ENCODE measurements at regions of chr3 and their contacts with region 1.

Region 1: GRCh38 chr3:66500576-66501482 is at the start of gene LRIG1:
- DNase-seq: peak; percentile 100
- ATAC-seq: peak; percentile 98 to 99
- H3K4me3 ChIP-seq: peak within 1 kb of the TSS; percentile 81
- H3K27ac ChIP-seq: peak within 1 kb of the TSS; percentile 76
- H3K4me1 ChIP-seq: peaks cover 3% of the 10 kb centered on the region
- H3K27me3 ChIP-seq: no peaks in the 10 kb centered on the region
- total RNA-seq, gene LRIG1: 103 to 140 (median 122) TPM

Region 2: GRCh38 chr3:66076861-66077470 is 423.9 kb before region 1 on chr3:
- intact Hi-C with region 1: no loop called
- DNase-seq: no peak
- ATAC-seq: no peak
- H3K4me3 ChIP-seq: no peak overlapping the region
- H3K27ac ChIP-seq: no peak overlapping the region
- H3K4me1 ChIP-seq: no peaks in the 10 kb centered on the region
- H3K27me3 ChIP-seq: no peaks in the 10 kb centered on the region

Region 3: GRCh38 chr3:66407611-66408218 is 93.1 kb before region 1 on chr3:
- intact Hi-C with region 1: loop called in 3 of 4 experiments (anchors 5 to 10 kb)
- DNase-seq: peak; percentile 67 to 91 (median 89)
- ATAC-seq: peak; percentile 64 to 65
- H3K4me3 ChIP-seq: no peak overlapping the region
- H3K27ac ChIP-seq: no peak overlapping the region
- H3K4me1 ChIP-seq: peaks cover 2% of the 10 kb centered on the region
- H3K27me3 ChIP-seq: no peaks in the 10 kb centered on the region

Region 4: DNA sequence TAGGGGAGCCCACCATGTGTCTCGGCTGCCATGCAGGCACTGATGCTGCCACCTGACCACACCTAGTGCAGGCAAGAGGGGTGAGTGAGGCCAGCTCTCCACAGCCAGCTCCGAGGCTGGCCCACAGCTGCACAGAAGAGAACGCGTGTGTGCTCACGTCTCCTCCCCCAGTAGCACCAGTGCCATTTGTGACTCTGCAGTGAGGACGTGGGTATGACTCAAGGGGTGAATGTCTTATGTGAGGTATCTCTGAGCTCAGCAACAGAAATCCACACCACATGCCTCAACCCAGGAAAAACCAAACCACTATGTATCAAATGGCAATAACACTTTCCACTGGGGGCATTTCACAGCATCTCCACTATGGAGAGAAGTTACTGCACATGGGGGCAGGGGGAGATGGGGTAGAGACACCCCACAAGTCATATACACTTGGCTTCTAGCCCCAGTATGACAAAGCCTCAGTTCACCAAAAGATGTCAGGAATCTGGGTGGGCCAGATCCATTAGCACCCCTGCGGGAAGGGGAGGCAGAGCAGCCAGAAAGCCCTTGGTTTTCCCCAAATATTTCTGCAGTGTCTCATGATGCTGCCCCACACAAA is 87.6 kb before region 1 on chr3:
- intact Hi-C with region 1: loop called (anchors 5 to 10 kb)
- DNase-seq: no peak
- ATAC-seq: no peak
- H3K4me3 ChIP-seq: no peak overlapping the region
- H3K27ac ChIP-seq: peak overlapping the region; percentile 18
- H3K4me1 ChIP-seq: peaks cover 11% of the 10 kb centered on the region
- H3K27me3 ChIP-seq: no peaks in the 10 kb centered on the region

Region 5: DNA sequence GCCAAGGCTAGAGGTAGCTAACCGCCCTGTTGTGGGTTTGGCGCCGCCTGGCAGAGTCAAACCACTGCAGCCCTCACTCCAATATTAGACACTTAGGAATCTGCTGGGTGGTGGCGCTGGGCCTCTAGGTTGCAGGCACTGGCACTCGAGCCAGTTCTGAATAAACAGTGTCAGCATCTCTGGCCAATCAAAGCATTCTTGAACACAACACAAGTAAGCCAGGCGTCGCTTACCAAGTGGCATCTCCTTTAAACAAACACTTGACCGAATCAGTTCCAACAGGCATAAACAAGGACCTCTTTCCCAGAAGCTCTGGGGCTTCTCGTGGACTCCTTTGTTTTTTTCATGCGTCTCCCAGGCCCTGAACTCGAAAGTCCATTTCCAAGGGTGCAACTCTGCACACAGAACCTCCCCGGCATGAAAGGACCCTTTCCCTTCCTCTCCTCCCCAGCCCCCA is 82.3 kb before region 1 on chr3:
- intact Hi-C with region 1: loop called in 3 of 4 experiments (anchors 5 to 10 kb)
- DNase-seq: peak in 2 of 3 donors; percentile 70
- ATAC-seq: peak; percentile 58 to 71
- H3K4me3 ChIP-seq: no peak overlapping the region
- H3K27ac ChIP-seq: peak overlapping the region; percentile 8
- H3K4me1 ChIP-seq: peaks cover 9% of the 10 kb centered on the region
- H3K27me3 ChIP-seq: no peaks in the 10 kb centered on the region

Region 6: DNA sequence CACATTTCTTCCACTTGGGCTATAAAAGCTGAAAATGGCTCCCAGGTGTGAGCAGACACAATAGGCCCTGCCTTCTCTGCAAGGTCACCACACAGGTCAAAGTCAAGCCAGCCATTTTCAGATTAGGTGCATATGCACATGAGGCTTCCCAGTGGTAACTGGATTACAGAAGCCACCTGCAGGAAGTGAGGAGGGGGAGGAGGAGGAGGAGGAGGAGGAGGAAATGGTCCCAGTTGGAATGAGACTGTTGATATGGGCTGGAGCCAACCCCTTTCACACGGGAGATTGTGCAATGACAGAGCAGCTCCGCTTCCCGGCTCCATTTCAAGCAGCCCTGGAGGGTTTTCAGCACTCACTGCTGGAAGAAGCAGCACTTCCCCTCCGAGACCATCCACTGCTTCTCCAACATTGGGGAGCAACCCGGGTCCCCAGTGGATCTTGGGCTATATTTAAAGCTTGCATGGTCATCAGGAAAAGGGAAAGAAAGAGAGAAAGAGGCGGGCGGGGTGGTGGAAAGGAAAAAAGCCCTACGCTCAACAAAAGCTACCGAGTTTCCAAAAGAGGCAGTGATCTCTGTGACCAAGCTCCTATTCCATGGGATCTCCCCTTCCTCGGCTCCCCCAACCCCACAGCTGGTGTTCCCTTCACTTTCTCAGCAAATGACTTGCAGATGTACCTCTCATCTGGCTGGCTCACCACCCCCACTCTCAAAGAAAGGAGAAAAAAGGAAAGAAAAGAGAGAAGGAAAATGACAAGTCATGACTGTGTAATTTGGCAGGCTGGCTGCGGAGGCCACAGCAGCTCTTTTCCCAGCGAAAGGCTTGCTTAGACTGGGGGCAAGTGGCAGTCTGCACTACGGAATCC is 58.3 kb before region 1 on chr3:
- intact Hi-C with region 1: loop called in 1 of 4 experiments (anchors 10 kb)
- DNase-seq: peak; percentile 70 to 87 (median 76)
- ATAC-seq: peak; percentile 87 to 90
- H3K4me3 ChIP-seq: no peak overlapping the region
- H3K27ac ChIP-seq: peak overlapping the region; percentile 47
- H3K4me1 ChIP-seq: peaks cover 20% of the 10 kb centered on the region
- H3K27me3 ChIP-seq: no peaks in the 10 kb centered on the region

Region 7: GRCh38 chr3:66456711-66457173 is 44.1 kb before region 1 on chr3:
- intact Hi-C with region 1: loop called in 1 of 4 experiments (anchors 5 kb)
- DNase-seq: peak; percentile 51 to 72 (median 64)
- ATAC-seq: peak; percentile 57 to 64
- H3K4me3 ChIP-seq: no peak overlapping the region
- H3K27ac ChIP-seq: peak overlapping the region; percentile 18
- H3K4me1 ChIP-seq: peaks cover 17% of the 10 kb centered on the region
- H3K27me3 ChIP-seq: no peaks in the 10 kb centered on the region

Region 8: DNA sequence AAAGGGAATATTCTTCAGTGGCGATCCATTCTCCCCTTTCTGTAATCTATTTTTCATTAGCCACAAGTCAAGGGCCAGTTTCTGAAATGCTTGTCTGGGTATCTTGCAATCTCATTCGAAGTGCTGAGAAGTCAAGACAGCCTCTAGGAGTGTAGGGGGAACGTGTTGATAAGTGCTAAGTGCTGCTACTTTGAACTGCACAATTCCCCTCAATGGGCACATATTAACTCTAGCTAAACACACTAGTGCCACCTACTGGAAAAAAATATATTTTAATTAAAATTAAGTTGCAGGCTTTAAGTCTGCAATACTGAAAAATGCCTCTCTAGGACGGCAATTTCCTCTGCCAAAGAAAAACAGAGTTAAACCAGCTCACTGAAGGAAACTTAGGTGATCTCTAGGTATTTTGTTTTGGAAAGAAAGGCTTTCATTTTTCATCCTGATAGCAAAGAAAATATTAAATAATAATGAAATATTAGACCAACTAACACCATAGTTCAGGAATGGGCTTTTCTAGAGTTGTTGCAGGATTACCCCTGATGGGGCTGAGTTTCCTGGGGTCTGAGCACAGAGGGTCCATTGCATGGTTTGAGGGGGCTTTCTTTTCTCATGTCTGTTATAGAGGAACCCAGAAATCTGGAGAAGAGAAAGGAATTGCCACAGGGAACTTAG is 315.4 kb after region 1 on chr3:
- intact Hi-C with region 1: loop called in 1 of 4 experiments (anchors 10 kb)
- DNase-seq: no peak
- ATAC-seq: peak; percentile 84 to 89
- H3K4me3 ChIP-seq: no peak overlapping the region
- H3K27ac ChIP-seq: no peak overlapping the region
- H3K4me1 ChIP-seq: no peaks in the 10 kb centered on the region
- H3K27me3 ChIP-seq: no peaks in the 10 kb centered on the region

Measured in right cardiac atrium (tissue), 5 donors.